ENCODE measurements at regions of chr9 and their contacts with region 1.

Region 1: DNA sequence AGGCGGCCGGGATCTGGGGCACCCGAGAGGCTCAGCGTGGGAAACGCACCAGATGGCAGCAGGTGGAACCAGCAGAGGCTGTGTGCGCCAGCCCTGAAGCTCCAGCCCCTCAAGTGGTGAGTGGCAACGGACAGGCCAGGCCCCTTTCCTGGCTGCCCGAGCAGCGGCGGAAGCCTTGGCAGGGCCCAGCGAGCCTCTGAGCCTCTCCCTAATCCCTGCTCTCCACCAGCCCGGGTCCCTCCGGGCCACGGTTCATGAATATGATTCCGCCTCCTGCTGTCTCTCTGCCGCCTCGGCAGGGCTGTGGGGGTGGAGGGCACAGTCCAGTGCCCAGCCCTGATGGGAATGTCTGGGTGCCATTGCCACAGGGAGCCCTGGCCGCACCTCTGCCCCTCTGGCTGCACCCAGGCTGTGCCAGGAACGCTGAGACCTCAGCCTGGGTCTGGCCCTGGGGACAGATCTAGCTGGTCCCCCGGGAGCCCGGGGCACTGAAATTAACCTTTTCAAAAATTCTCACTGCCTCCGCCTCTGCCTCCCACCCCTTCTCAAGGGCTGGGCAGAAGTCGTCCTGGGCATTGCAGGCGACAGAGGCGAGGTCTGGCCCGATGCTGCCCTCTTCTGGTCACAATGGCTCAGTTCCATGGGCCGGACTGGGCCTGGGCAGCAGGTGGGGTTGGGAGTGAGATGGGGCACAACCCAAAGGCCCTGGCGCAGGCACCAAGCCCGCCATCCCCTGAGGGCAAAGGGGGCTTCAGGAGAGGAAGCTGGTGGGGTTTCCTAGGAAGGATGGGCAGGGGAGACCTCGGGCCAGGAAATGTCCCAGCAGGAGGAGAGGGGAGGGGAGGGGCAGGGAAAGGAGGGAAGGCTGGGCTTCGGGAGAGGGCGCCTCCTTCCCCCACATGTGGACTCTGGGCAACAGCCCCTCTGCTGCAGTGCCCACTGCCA is 20.3 kb downstream of the CCDC187 start:
- DNase-seq: peak; percentile 78 to 88
- ATAC-seq: peak; percentile 89 to 98
- H3K4me3 ChIP-seq: no peak overlapping the region
- H3K27ac ChIP-seq: no peak overlapping the region
- H3K4me1 ChIP-seq: 0 out of 3 replicates have a peak, but pooled peaks cover 2% of the 10 kb centered on the region
- CTCF ChIP-seq: peak; percentile 80
- EP300 ChIP-seq: no peak
- POLR2A ChIP-seq: no peak
- RAD21 ChIP-seq: peak; percentile 85 to 90

Region 2: GRCh38 chr9:136089697-136090045 is 193.9 kb before region 1 on chr9:
- CTCF ChIA-PET with region 1: no interaction called
- POLR2A ChIA-PET with region 1: no interaction called
- DNase-seq: no peak
- ATAC-seq: no peak
- H3K4me3 ChIP-seq: no peak overlapping the region
- H3K27ac ChIP-seq: peak overlapping the region in 1 of 2 experiments; percentile 92; a peak in 3 of 6 replicates
- H3K4me1 ChIP-seq: peaks cover 48% of the 10 kb centered on the region
- CTCF ChIP-seq: peak; percentile 59
- EP300 ChIP-seq: no peak
- POLR2A ChIP-seq: no peak
- RAD21 ChIP-seq: peak; percentile 54 to 66; a peak in 4 of 5 replicates

Region 3: DNA sequence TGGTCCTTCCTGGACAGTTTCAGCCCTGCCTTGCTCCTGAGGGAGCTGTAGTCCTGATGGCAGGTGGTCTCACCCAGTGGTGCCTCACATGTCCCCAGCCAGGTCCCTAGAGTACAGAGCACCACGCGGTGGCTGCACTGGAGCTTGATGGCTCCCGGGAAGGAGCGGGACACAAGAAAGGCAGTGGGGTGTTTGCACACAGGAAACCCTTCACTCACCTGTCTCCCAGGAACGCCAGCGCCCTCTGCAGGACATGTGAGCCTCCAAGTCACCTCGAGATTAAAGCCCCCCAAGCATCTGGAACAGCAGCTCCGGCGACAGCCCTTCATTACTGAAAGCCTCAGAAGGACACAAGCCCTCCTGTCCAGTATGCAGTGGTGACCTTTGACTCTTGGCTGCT is 145.0 kb before region 1 on chr9:
- CTCF ChIA-PET with region 1: interaction called, 20 read pairs
- POLR2A ChIA-PET with region 1: no interaction called
- DNase-seq: peak in 1 of 2 experiments; percentile 69
- ATAC-seq: peak in 1 of 2 experiments; percentile 22; a peak in 2 of 6 replicates
- H3K4me3 ChIP-seq: no peak overlapping the region
- H3K27ac ChIP-seq: no peak overlapping the region
- H3K4me1 ChIP-seq: peaks cover 4% of the 10 kb centered on the region; the same call in 2 of the 3 replicates
- CTCF ChIP-seq: peak; percentile 29; the same call in 1 of the 3 replicates
- EP300 ChIP-seq: no peak
- POLR2A ChIP-seq: no peak
- RAD21 ChIP-seq: peak in 1 of 2 experiments; percentile 44; a peak in 1 of 5 replicates

Region 4: DNA sequence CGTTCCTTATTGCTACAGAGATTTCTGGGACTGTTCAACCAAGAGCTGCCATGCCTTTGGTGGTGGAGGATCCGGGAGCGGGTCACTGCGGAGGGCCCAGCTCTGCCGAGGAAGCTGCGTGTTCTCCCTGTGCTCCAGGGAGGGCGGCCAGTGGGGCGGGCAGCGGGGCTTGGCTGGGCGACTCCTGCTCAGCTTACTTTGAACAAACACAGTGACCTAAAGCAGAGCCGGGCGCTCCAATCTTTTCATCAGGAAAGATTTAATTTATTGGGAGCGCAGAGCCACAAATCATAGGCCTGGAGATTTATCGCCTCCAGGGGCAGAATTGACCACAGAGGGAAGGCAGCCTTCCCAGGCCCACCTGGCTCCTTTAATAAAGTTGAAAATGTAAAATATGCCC is 106.3 kb before region 1 on chr9:
- CTCF ChIA-PET with region 1: interaction called, 64 read pairs
- POLR2A ChIA-PET with region 1: no interaction called
- DNase-seq: no peak
- ATAC-seq: no peak
- H3K4me3 ChIP-seq: no peak overlapping the region
- H3K27ac ChIP-seq: no peak overlapping the region
- H3K4me1 ChIP-seq: no peaks in the 10 kb centered on the region
- CTCF ChIP-seq: no peak
- EP300 ChIP-seq: no peak
- POLR2A ChIP-seq: no peak
- RAD21 ChIP-seq: no peak

Region 5: GRCh38 chr9:136267261-136268111 is 16.1 kb before region 1 on chr9:
- CTCF ChIA-PET with region 1: interaction called, 49 read pairs
- POLR2A ChIA-PET with region 1: interaction called, 11 read pairs
- DNase-seq: peak; percentile 85 to 89
- ATAC-seq: peak; percentile 84 to 93
- H3K4me3 ChIP-seq: peak overlapping the region; percentile 46
- H3K27ac ChIP-seq: peak overlapping the region; percentile 79 to 86
- H3K4me1 ChIP-seq: peaks cover 5% of the 10 kb centered on the region; the same call in 1 of the 3 replicates
- CTCF ChIP-seq: peak; percentile 29; the same call in 2 of the 3 replicates
- EP300 ChIP-seq: no peak
- POLR2A ChIP-seq: peak; percentile 94
- RAD21 ChIP-seq: peak in 1 of 2 experiments; percentile 38; a peak in 1 of 5 replicates

Region 6: DNA sequence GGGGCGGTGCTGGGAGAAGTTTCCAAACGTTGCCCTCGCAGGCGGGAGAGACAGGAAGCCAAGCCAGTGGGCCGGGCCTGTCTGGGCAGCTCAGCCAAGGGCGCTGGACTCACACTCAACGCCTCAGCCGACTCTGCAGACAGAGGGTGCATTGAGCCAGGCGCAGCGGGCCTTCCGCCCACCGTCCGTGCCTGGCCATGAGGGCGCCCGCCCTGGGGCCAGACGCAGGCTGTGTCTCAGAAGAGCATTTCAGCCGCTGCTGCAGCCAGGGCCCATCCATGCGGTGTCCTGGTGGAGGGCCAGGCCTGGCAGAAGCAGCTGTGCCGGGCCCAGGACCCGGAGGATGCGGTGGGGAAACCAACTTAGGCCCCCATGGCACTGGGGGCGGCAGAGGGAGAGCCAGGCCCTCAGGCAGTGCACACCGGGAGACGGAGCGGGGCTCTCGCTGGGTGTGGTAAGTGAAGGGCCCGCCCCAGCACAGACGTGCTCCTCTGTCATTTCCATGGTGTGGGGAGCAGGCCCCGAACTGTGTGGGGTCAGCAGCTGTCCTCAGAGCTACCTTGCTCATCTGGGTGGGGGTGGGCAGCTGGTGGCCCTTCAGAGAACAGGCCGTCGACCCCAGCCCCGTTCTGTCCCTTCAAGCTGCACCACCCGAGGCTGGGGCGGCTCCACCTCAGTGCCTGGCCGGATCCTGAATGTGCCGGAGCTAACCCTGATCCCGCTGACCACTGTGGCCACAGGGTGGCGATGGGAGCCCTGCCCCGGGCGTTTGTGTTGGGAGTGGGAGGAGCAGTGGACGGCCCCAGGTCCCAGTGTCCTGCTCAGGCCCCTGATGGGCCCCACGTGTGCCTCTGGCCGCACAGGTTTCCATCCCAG is 62.0 kb after region 1 on chr9:
- CTCF ChIA-PET with region 1: interaction called, 10 read pairs
- POLR2A ChIA-PET with region 1: no interaction called
- DNase-seq: peak; percentile 52 to 57
- ATAC-seq: peak; percentile 70 to 87
- H3K4me3 ChIP-seq: no peak overlapping the region
- H3K27ac ChIP-seq: peak overlapping the region in 1 of 2 experiments; percentile 73; a peak in 3 of 6 replicates
- H3K4me1 ChIP-seq: peaks cover 8% of the 10 kb centered on the region; the same call in 2 of the 3 replicates
- CTCF ChIP-seq: peak; percentile 34; the same call in 2 of the 3 replicates
- EP300 ChIP-seq: no peak
- POLR2A ChIP-seq: no peak
- RAD21 ChIP-seq: peak; percentile 36 to 52